ENCODE measurements at regions of chr11 and their contacts with region 1.

Region 1: DNA sequence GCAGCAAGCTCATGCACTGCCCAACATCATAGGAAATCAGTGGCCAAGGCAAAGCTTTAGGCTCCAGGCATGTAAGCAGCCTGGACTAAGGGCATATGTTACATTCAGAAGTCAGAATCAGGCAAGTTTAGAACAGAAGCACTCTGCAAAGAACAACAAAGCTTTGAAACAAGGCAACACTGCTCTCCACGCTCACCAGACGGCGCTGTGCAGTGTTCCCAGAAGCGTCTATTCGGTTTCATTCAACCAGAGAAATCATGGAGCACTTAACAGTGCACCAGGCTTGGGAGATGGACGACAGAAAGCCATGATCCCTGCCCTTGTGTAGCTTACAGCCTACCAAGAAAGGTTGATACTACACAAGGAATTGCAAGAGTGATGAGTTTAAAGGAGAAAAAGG is 555.8 kb downstream of the BUD13 start:
- DNase-seq: peak; percentile 75
- ATAC-seq: peak; percentile 71
- H3K4me3 Mint-ChIP-seq: no peak overlapping the region
- H3K27ac Mint-ChIP-seq: no peak overlapping the region
- H3K4me1 Mint-ChIP-seq: peaks cover 13% of the 10 kb centered on the region
- H3K27me3 Mint-ChIP-seq: no peaks in the 10 kb centered on the region
- CTCF ChIP-seq: peak; percentile 71

Region 2: DNA sequence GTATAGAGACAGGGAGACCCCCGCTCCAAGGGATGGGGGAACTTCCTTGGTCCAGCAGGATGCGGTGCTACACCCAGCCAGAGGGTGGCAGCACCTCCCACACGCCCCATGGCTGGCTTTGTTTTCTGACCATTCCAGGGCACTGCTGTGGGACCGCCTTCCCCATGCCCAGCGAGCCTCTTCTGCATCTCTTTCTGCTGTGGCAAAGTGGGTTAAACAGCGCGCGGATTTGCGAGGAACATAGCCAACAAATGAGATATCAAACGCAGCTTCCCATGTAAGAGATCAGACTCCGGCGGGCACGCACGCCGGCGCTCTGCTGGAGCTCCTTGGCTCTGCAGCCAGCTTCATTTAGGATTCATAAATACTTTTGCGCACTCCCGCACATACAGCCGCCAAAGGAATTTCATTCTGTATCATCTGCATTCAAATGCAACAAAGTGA is 227.0 kb before region 1 on chr11:
- CTCF ChIA-PET with region 1: interaction called, 22 read pairs
- POLR2A ChIA-PET with region 1: no interaction called
- DNase-seq: peak; percentile 80
- ATAC-seq: peak; percentile 99
- H3K4me3 Mint-ChIP-seq: peak overlapping the region; percentile 53
- H3K27ac Mint-ChIP-seq: no peak overlapping the region
- H3K4me1 Mint-ChIP-seq: peaks cover 15% of the 10 kb centered on the region
- H3K27me3 Mint-ChIP-seq: peaks cover 3% of the 10 kb centered on the region; the same call in 1 of the 2 replicates
- CTCF ChIP-seq: peak; percentile 68

Region 3: DNA sequence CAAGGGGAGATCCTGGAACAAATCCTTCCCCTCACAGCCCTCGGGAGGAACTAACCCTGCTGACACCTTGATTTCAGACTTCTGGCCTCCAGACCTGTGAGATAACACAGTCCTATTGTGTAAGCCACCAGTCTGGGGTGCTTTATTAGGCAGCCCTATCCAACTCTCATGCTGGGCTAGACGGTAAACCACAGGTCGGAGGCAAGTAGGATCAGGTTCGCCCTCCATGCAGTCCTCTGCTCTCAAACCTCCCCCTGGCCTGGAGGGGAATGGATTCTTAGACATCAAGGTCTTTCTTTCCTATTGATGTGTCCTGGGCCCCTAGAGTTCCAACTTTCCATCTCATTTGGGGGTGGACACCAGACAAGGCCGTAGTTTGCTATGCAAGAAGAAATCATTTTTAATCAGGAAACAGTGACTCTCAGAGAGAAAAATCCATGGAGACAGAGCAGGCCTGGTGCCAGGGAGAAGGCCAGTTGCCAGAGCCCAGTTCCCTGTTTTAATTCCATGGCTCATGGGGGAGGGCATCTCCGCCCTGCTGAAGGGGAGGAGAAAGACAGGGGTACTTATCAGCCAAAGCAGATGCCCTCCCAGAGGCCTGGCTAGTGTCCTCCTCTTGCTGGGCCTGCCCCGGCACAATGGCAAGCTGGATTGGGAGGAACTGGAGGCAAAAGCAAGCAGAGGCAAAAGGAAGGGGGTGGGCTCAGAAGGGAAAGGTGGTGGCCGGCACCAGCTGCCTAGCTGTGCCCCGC is 36.4 kb before region 1 on chr11:
- CTCF ChIA-PET with region 1: interaction called, 70 read pairs
- POLR2A ChIA-PET with region 1: no interaction called
- DNase-seq: no peak
- ATAC-seq: peak; percentile 12; the same call in 1 of the 2 replicates
- H3K4me3 Mint-ChIP-seq: no peak overlapping the region
- H3K27ac Mint-ChIP-seq: no peak overlapping the region
- H3K4me1 Mint-ChIP-seq: peaks cover 46% of the 10 kb centered on the region
- H3K27me3 Mint-ChIP-seq: no peaks in the 10 kb centered on the region
- CTCF ChIP-seq: no peak

Region 4: DNA sequence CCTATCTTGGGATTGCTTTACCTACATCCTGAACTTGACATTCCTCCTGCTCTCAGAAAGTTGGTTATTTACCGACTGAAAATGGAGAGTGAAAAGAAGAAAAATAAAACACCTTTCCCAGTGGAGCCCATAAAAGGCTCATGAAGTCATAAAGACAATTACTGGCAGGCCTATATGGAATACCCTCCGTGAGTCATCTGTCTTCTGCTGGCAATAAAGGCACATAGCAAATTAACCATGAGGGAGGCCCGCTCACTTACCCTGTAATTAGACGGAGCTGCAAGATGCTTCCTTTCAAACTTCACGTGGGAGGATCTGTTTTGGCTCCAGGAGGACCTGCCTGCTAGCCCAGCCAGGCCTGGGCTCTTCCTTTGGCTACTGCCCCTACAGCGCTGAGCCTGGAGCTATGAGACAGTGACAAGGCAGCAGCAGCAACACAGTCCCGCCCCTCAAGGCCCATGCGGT is 15.4 kb after region 1 on chr11:
- CTCF ChIA-PET with region 1: interaction called, 69 read pairs
- POLR2A ChIA-PET with region 1: no interaction called
- DNase-seq: no peak
- ATAC-seq: no peak
- H3K4me3 Mint-ChIP-seq: no peak overlapping the region
- H3K27ac Mint-ChIP-seq: no peak overlapping the region
- H3K4me1 Mint-ChIP-seq: peaks cover 18% of the 10 kb centered on the region
- H3K27me3 Mint-ChIP-seq: no peaks in the 10 kb centered on the region
- CTCF ChIP-seq: no peak

Region 5: DNA sequence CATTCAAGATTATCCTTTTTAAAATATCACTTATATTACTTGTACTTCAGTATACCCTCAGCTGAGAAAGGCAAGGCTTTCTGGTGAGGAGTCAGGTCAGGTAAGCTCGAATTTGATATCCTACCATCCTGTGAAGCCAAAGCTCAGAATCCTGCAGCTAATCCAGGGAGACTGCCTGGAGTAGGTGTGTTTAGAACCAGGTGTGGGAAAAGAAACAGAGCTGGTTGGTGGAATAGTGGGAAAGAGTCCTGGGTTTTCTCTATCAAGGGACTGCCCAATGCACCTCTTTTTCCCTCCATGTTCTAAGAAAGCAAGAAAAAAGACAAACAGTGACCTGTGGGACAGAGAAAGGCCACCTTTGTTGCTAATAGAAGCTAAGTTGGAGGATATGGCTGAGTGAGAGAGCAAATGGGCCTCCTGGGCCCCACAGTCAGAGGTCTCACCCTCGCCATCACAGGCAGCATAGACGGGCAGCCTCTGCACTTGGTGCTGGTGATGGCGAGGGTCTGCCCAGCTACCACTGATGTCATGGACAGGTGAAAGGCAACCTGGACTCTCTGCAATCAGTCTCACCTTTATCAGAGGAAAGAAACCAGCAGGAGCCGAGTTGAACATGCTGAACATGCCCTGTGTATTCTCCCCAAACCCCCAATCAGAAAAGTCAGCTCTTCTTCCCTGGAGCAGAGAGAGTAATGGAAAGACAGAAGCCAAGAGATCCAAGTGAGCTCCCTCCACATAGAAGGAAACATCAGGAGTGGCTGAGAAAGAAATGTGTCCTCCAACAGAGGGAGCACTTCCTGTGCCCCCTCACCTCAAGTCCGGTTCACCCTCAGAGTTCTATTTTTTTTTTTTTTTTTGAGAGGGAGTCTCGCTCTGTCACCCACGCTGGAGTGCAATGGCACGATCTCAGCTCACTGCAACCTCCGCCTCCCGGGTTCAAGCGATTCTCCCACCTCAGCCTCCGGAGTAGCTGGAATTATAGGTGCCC is 64.5 kb after region 1 on chr11:
- CTCF ChIA-PET with region 1: interaction called, 23 read pairs
- POLR2A ChIA-PET with region 1: no interaction called
- DNase-seq: no peak
- ATAC-seq: peak; percentile 66
- H3K4me3 Mint-ChIP-seq: no peak overlapping the region
- H3K27ac Mint-ChIP-seq: no peak overlapping the region
- H3K4me1 Mint-ChIP-seq: no peaks in the 10 kb centered on the region; the same call in 1 of the 2 replicates
- H3K27me3 Mint-ChIP-seq: no peaks in the 10 kb centered on the region
- CTCF ChIP-seq: no peak

Measured in WTC11 (cell line).